Testis (tissue), 5 donors: ENCODE measurements at regions of chr9 and their contacts with region 1.

Region 1: GRCh38 chr9:92786298-92786697 is 21.7 kb upstream of the BICD2 start:
- DNase-seq: no peak
- H3K4me3 ChIP-seq: no peak overlapping the region
- H3K27ac ChIP-seq: no peak overlapping the region
- H3K4me1 ChIP-seq: no peaks in the 10 kb centered on the region
- H3K27me3 ChIP-seq: no peaks in the 10 kb centered on the region
- CTCF ChIP-seq: no peak
- POLR2A ChIP-seq: no peak

Region 2: DNA sequence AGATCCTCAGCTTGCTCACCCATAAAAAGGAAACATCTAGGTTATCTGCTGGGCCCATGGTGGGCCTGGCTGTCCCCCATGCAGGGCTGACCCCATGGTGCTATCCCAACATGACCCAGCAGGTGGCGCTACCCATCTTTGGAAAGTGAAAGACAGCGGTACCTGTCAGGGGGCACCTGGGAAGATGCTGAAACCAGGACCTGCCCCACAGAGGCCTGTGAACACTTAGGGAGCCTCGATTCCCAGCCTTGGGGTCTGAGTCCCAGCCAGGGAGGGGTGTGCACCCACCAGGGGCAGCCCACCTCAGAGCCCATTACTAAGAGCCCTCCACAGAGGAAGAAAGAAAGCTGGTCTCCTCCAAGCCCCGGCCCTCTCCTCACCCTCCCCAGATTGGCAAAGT is 69.7 kb before region 1 on chr9:
- intact Hi-C with region 1: loop called (anchors 5 kb)
- DNase-seq: peak; percentile 74
- H3K4me3 ChIP-seq: no peak overlapping the region
- H3K27ac ChIP-seq: peak overlapping the region; percentile 53 to 55
- H3K4me1 ChIP-seq: peaks cover 15% of the 10 kb centered on the region
- H3K27me3 ChIP-seq: no peaks in the 10 kb centered on the region
- CTCF ChIP-seq: peak; percentile 86 to 95 (median 87)
- POLR2A ChIP-seq: no peak